Cardiac septum (tissue), 1 donor: ENCODE measurements at regions of chr19 and their contacts with region 1.

Region 1: DNA sequence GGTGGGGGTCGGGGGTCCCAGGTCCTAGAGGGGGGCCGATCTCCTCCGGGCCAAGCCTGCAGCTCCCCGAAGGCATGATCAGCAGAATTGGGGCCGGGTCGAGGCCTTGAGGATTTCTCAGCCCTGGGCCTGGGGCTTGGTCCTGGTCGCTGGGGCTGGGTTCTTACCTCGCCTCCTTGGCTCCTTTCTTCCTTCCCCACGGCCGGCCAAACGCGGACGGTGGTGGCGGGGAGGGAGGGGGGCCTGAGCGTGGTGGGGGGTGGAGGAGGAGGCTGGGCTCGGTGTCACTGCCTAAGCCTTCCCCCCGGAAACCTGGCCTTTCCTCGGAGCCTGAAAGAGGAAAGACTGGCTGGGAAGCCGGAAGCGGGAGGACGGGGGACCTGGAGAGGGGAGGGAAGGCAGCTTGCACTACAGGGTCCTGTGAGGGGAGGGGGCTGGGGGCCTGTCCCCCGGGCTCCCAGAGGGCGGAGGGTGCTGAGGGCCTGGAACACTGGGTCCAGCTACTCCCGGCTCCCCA is at the start of gene ZNF579:
- DNase-seq: peak; percentile 91
- total RNA-seq, gene ZNF579: 12.2 TPM

Region 2: GRCh38 chr19:55549500-55550320 is 31.0 kb before region 1 on chr19:
- intact Hi-C with region 1: loop called (anchors 5 kb)
- DNase-seq: no peak

Region 3: GRCh38 chr19:55678121-55678675 is 97.5 kb after region 1 on chr19:
- intact Hi-C with region 1: no loop called
- DNase-seq: no peak